ENCODE measurements at regions of chr2 and their contacts with region 1.

Region 1: DNA sequence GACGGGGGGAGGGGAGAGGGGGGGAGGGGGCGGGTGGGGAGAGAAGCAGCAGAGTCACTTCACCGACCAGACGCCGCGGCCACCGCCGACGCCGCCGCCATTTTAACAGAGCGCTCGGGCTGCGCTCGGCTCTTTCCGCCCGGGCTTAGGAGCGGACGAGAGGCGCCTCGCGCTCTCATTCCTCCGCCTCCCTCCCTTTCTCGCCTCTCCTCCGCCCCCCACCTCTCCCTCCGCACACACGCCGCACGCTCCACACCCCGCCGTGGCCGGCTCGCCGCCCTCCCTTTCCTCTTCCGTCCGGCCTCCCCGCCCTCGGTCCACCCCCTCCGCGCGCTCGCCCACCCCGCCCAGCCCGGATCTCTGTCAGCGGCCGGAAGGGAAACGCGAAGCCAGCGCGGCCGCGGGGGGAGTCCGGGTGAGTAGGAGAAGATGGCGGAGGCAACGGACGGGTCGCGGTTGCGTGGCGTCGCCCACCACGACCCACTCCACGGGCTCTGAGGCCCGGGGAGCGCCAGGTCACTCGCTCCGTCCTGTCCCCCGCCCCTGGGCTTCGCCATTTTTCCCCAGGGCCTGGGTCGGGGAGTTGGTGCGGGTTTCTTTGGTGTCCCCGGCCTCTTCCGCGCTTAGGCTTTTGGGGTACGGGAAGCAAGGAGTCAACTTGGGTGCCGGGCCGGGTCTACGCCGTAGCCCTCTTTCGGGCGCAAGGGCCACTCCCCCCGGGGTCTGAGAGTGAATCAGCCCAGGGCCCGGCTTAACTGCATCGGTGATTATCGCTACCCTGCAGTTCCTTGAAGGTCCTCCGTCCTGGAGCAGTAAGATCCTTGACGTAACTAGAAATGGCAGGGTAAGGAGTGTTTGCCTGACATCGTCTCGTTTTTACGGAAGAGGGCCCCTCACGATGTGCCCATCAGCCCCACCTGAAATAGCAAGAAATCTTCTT is at the start of gene USP34:
- DNase-seq: peak; percentile 96
- ATAC-seq: peak; percentile 97 to 98 (median 97)
- H3K4me3 ChIP-seq: peak within 1 kb of the TSS; percentile 80 to 99 (median 92)
- H3K27ac ChIP-seq: peak within 1 kb of the TSS; percentile 96 to 100 (median 99)
- H3K4me1 ChIP-seq: peaks cover 0 to 45% (median 26%) of the 10 kb centered on the region in 9 donors
- H3K27me3 ChIP-seq: no peaks in the 10 kb centered on the region
- CTCF ChIP-seq: no peak
- total RNA-seq, gene USP34: 46.1 to 75.7 (median 60.8) TPM

Region 2: DNA sequence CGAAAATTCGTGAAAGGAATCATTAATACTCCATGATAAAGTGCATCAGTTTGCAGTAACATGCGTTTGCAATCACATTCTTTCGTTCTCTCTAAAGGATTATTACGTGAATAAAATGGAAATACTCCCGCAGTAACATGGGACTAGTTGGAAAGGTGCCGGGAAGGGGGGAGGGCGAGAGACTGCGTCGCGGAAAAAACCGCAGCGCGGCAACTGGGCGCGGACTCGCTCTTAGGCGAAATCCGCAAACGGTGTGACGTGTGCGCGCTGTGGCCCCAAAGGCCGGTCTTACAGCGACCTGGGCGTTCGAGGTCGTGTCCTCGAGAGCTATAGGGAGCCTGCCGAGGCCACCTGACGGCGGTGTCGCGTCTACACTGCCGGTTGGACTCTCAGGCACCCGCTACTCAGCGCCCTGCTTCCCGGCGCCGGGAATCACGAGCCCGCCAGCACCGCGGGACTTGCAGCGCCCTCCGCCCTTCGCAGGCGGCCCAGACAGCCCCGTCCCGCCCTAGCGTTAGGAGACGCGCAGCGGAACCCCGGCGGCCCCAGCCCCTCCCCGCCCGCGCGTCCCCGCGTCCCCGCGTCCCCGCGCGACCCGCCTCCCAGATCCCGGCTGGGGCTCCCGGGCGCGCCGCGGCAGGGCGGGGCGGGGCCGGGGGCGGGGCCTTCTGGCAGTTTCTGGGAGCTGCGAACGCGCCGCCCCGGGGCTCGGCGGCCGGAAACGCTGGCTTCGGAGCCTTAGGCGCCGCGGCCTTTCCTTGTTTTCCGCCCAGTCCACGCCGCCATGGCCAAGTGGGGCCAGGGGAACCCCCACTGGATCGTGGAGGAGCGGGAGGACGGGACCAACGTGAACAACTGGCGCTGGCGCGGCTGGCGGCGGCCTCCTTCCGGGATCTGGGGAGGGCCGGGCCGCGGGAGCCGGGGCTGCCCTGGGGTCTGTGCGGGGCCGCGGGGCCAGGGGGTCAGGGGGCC is 294.2 kb before region 1 on chr2:
- intact Hi-C with region 1: loop called in 1 of 10 experiments (anchors 10 kb)
- DNase-seq: peak; percentile 94 to 97
- ATAC-seq: peak; percentile 87 to 95 (median 92)
- H3K4me3 ChIP-seq: peak overlapping the region; percentile 62 to 97 (median 86)
- H3K27ac ChIP-seq: peak overlapping the region; percentile 94 to 100 (median 98)
- H3K4me1 ChIP-seq: peaks cover 21 to 54% (median 47%) of the 10 kb centered on the region in 9 donors
- H3K27me3 ChIP-seq: no peaks in the 10 kb centered on the region
- CTCF ChIP-seq: peak in 3 of 9 donors; percentile 23 to 43 (median 34)

Region 3: DNA sequence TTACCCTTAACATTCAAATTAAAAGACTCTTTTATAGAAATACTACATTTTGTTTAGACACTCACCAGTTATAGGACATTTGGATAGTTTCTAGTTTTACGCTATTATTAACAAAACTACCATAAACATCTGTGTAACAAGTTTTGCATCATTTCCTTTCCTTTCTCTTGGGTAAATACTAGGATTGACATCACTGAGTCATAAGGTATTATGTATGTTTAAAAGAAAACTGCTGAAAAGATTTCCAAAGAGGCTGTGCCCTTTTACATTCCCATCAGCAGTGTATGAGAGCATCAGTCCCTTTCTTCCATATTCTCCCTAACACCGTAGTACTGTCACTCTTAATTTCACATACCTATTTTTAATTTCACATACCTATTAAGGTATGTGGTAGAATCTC is 131.0 kb before region 1 on chr2:
- intact Hi-C with region 1: loop called in 1 of 10 experiments (anchors 10 kb)
- DNase-seq: no peak
- ATAC-seq: no peak
- H3K4me3 ChIP-seq: no peak overlapping the region
- H3K27ac ChIP-seq: no peak overlapping the region
- H3K4me1 ChIP-seq: peaks cover 0 to 4% (median 0%) of the 10 kb centered on the region in 9 donors
- H3K27me3 ChIP-seq: no peaks in the 10 kb centered on the region
- CTCF ChIP-seq: no peak

Region 4: DNA sequence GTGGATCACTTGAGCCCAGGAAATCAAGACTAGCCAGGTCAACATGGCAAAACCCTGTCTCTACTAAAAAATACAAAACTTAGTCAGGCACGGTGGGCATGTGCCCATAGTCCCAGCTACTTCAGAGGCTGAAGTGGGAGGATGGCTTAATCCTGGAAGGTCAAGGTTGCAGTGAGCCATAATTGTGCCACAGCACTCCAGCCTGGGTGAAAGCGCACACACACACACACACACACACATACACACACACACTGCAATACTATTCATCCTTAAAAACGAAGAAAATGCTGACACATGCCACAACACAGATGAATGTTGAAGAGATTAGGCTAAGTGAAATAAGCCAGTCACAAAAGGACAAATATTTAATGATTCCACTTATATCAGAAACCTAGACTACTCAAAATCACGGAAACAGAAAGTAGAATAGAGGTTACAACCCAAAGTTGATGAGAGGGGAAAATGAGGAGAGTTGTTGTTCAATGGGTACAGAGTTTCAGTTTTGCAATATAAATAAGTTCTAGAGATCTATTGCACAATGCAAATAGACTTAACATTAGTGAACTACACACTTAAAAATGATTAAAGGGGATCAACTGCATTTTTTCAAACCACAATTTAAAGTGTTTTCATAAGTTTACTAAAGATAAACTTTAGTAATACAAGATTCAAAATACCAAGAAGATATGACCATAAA is 114.8 kb before region 1 on chr2:
- intact Hi-C with region 1: loop called in 2 of 10 experiments (anchors 10 kb)
- DNase-seq: no peak
- ATAC-seq: peak in 6 of 8 donors; percentile 17 to 51 (median 26)
- H3K4me3 ChIP-seq: no peak overlapping the region
- H3K27ac ChIP-seq: peak overlapping the region in 4 of 10 donors; percentile 12 to 30 (median 28)
- H3K4me1 ChIP-seq: peaks cover 0 to 47% (median 33%) of the 10 kb centered on the region in 9 donors
- H3K27me3 ChIP-seq: no peaks in the 10 kb centered on the region
- CTCF ChIP-seq: no peak

Region 5: DNA sequence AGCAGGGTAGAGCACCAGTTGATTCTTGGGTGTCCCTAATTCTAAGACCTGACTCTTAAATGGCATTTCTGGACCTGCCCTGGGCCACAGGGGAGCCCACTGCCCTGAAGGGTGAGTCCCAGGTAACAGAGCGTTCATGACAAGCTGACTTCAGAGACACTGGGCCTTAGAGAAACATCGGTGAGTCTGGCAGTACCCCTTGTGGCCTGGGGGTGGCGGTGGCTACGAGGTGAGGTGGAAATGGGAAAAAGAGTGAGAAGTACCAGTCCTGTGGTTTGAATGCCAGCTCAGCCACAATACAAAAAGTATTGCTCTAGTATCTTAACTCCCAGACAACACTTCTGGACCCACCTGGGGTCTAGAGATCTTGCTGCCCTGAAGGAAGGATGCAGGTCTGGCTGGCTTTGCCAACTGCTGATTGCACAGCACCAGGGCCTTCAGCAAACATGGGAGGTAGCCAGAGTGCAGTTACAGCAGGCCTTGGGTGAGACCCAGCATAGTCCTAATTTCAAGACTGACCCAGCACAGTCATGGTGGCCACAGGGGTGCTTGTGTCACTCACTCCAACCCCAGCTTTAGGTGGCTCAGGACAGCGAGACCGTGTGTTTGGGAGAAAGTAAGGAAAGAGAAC is 44.9 kb before region 1 on chr2:
- intact Hi-C with region 1: loop called in 2 of 10 experiments (anchors 5 kb)
- DNase-seq: no peak
- ATAC-seq: peak in 6 of 8 donors; percentile 33 to 64 (median 50)
- H3K4me3 ChIP-seq: no peak overlapping the region
- H3K27ac ChIP-seq: peak overlapping the region in 1 of 10 donors; percentile 5
- H3K4me1 ChIP-seq: peaks cover under 1 to 63% (median 45%) of the 10 kb centered on the region in 9 donors
- H3K27me3 ChIP-seq: no peaks in the 10 kb centered on the region
- CTCF ChIP-seq: peak in 7 of 9 donors; percentile 22 to 68 (median 41)

Measured in heart right ventricle (tissue), 16 donors.